ENCODE measurements at regions of chr7 and their contacts with region 1.

Region 1: GRCh38 chr7:150980663-150981062 is 2.5 kb upstream of the KCNH2 start:
- DNase-seq: no peak
- H3K4me3 ChIP-seq: no peak overlapping the region
- H3K27ac ChIP-seq: no peak overlapping the region
- H3K27me3 ChIP-seq: peaks cover 50% of the 10 kb centered on the region
- CTCF ChIP-seq: no peak

Region 2: GRCh38 chr7:150787321-150788281 is 193.1 kb before region 1 on chr7:
- CTCF ChIA-PET with region 1: interaction called, 10 read pairs
- POLR2A ChIA-PET with region 1: no interaction called
- DNase-seq: no peak
- H3K4me3 ChIP-seq: no peak overlapping the region
- H3K27ac ChIP-seq: no peak overlapping the region
- H3K27me3 ChIP-seq: peaks cover 2% of the 10 kb centered on the region
- CTCF ChIP-seq: no peak